ENCODE measurements at regions of chr9 and their contacts with region 1.

Region 1: DNA sequence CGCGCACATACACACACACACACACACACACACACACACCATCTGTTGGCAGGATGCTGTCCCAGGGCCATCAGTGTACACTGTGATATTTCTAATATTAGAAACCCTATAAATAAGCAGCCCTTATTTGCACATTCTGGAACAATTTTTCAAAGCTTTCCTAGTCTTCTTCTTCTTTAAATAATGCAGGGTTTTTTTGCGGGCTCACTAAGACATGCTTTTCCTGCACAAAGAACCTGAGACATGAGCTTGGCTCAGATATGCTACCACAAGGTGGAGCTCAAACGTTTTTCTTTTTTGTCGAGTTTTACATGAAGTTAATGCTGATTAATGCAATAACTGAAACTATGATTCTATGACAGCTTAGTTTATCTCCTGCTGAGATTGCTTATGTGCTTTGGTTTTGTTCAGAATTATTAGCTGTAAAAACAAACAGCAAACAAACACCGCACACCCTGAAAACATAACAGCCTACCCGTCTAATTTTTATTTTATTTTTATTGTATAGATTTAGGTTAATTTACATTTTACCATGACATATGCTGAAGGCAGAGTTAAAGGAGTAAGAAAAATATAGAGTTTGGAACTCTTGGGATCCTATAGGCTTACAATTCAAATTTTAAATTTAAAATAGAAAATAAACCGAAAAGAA is 95.8 kb downstream of the ALDH1A1 start:
- DNase-seq: peak; percentile 66
- H3K4me3 ChIP-seq: no peak overlapping the region
- H3K27ac ChIP-seq: no peak overlapping the region
- H3K27me3 ChIP-seq: no peaks in the 10 kb centered on the region
- CTCF ChIP-seq: peak; percentile 75

Region 2: DNA sequence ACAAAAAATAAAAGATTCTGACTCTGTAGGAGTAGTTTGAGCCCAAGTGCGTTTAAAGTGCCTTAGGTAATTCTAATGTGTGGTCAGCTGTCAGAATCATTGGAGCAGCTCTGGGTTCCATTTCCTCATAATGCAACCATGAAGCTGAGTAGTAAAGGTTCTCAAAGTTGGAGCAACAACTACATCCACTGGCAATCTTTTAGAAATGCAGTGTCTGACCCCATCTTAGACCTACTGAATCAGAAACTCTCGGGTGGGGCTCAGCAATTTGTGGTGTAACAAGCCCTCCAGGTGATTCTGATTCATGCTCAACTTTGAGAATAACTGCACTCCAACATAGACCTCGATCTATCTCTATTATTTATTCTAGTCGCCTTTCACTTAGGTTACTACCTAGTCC is 103.3 kb after region 1 on chr9:
- in situ Hi-C with region 1: no loop called
- DNase-seq: no peak
- H3K4me3 ChIP-seq: no peak overlapping the region
- H3K27ac ChIP-seq: no peak overlapping the region
- H3K27me3 ChIP-seq: no peaks in the 10 kb centered on the region
- CTCF ChIP-seq: no peak

Region 3: DNA sequence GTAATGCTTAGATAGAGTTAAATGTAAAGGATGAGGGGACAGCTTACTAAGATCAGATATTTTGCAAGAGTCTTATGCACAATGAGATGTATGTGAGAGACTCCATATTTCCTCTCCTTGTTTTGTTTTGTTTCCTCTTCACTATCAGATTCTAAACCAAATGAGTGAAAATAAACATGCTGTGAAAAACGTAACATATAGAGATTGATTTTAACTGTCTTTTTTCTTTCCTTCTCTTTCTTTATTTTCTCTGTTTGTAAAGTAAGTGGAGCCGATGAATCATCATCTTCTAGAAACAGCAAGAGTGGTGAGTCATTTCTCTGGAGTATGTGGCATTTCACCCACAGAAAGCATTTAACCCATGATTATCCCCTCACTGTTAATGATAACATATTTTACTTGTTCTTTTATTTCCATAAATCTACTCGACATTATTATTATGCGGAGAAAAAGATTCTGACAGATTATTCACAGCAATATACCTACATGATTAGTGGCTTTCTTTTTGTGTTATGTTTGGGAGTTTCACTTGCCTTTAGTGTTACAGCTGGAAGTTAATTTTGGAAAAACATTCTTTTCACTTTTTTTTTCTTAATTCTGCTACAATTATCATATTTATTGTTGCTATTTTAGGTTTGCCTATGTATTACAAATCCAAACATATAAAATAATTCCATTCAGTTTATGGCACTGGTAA is 292.4 kb after region 1 on chr9:
- in situ Hi-C with region 1: loop called (anchors 25 kb)
- DNase-seq: peak; percentile 83
- H3K4me3 ChIP-seq: peak overlapping the region; percentile 18
- H3K27ac ChIP-seq: peak overlapping the region; percentile 81
- H3K27me3 ChIP-seq: no peaks in the 10 kb centered on the region
- CTCF ChIP-seq: no peak